GM10248 (cell line): ENCODE measurements at regions of chr1 and their contacts with region 1.

Region 1: DNA sequence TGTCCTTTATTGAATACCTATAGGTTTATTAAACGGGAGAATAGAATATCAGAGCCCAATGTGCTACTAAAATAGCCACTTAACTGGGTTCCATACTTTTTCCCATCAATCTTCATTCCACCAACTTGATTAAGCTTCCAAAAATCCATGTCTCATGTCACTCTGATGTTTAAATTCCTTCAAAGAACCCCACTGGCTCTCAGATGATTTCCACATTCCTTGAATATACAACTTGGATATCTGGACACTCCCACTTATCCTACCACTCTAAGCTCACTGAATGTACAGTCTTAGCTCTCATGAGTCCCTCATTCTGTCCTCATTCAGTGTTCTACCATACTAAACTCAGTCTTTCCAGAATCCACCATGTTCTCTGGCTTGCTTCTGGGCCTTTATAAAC is 21.1 kb downstream of the COL11A1 start:
- DNase-seq: no peak
- CTCF ChIP-seq: no peak

Region 2: GRCh38 chr1:103101399-103101798 is 14.1 kb after region 1 on chr1:
- CTCF ChIA-PET with region 1: interaction called, 10 read pairs
- POLR2A ChIA-PET with region 1: no interaction called
- DNase-seq: no peak
- CTCF ChIP-seq: no peak